ENCODE measurements at regions of chr11 and their contacts with region 1.

Region 1: DNA sequence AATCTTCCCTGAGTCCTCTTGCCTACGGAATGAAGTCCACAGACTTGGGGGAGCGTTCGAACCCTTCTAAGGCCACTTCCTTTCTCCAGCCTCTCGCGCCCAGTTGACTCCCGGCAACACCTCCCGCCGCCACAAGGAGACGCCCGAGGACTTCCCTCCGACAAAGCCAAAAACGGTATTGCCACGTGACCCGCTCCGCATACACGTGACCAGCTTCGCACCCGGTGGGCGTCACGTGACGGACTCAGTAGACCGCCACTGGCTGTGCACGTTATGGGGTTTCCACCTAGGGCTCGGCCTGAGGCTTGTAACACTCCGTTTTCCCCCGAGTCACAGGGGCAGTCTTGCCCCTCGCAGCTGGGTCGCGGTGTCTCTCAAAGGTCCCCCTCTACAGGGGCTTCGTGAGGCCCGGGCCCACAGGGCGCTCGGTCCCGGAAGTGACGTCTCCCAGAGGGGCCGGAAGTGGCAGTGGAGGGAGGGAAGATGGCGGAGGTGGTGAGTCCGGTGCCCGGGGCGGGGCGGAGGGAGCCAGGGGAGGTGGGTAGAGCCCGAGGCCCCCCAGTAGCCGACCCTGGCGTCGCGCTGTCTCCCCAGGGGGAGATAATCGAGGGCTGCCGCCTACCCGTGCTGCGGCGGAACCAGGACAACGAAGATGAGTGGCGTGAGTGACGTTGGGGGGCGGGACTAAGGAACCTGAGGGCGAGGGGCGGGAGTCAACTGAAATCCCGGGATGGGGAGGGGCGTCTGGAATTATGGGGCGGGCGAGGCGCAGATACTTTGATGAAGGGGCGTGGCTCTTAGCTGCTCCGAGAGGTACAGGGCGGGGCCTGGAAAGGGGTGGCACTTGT is at the start of gene KAT5:
- DNase-seq: peak; percentile 98 to 100 (median 99)
- H3K4me3 ChIP-seq: peak within 1 kb of the TSS; percentile 63 to 98
- H3K4me3 Mint-ChIP-seq: peak within 1 kb of the TSS; percentile 93 to 99 (median 96)
- H3K27ac ChIP-seq: peak within 1 kb of the TSS; percentile 98
- H3K27ac Mint-ChIP-seq: peak within 1 kb of the TSS; percentile 99 to 100 (median 99)
- H3K4me1 ChIP-seq: peaks cover 19% of the 10 kb centered on the region
- H3K4me1 Mint-ChIP-seq: peaks cover 9 to 38% (median 24%) of the 10 kb centered on the region in 4 donors
- H3K27me3 ChIP-seq: no peaks in the 10 kb centered on the region
- H3K27me3 Mint-ChIP-seq: no peaks in the 10 kb centered on the region
- total RNA-seq, gene KAT5: 93.5 to 106 TPM

Region 2: GRCh38 chr11:65652511-65653231 is 59.3 kb before region 1 on chr11:
- CTCF ChIA-PET with region 1: interaction called, 4 read pairs
- POLR2A ChIA-PET with region 1: interaction called, 17 read pairs
- intact Hi-C with region 1: no loop called
- DNase-seq: peak; percentile 95 to 99 (median 97)
- H3K4me3 ChIP-seq: peak overlapping the region; percentile 50 to 64
- H3K4me3 Mint-ChIP-seq: peak overlapping the region; percentile 88 to 95 (median 91)
- H3K27ac ChIP-seq: peak overlapping the region; percentile 91
- H3K27ac Mint-ChIP-seq: peak overlapping the region; percentile 96 to 99 (median 98)
- H3K4me1 ChIP-seq: peaks cover 35% of the 10 kb centered on the region
- H3K4me1 Mint-ChIP-seq: peaks cover 34 to 59% (median 48%) of the 10 kb centered on the region in 4 donors
- H3K27me3 ChIP-seq: no peaks in the 10 kb centered on the region
- H3K27me3 Mint-ChIP-seq: no peaks in the 10 kb centered on the region

Region 3: GRCh38 chr11:65773784-65774411 is 61.9 kb after region 1 on chr11:
- CTCF ChIA-PET with region 1: interaction called, 39 read pairs
- POLR2A ChIA-PET with region 1: interaction called, 8 read pairs
- intact Hi-C with region 1: loop called (anchors 1 kb)
- DNase-seq: no peak
- H3K4me3 ChIP-seq: no peak overlapping the region
- H3K4me3 Mint-ChIP-seq: no peak overlapping the region
- H3K27ac ChIP-seq: no peak overlapping the region
- H3K27ac Mint-ChIP-seq: no peak overlapping the region
- H3K4me1 ChIP-seq: peaks cover 3% of the 10 kb centered on the region
- H3K4me1 Mint-ChIP-seq: peaks cover 0 to 8% (median 3%) of the 10 kb centered on the region in 4 donors
- H3K27me3 ChIP-seq: no peaks in the 10 kb centered on the region
- H3K27me3 Mint-ChIP-seq: no peaks in the 10 kb centered on the region

Region 4: GRCh38 chr11:65817835-65818742 is 106.1 kb after region 1 on chr11:
- CTCF ChIA-PET with region 1: interaction called, 53 read pairs
- POLR2A ChIA-PET with region 1: interaction called, 25 read pairs
- intact Hi-C with region 1: loop called (anchors 1 kb)
- DNase-seq: peak; percentile 86 to 93 (median 88)
- H3K4me3 ChIP-seq: peak overlapping the region; percentile 24 to 70
- H3K4me3 Mint-ChIP-seq: peak overlapping the region; percentile 73 to 85 (median 78)
- H3K27ac ChIP-seq: peak overlapping the region; percentile 53
- H3K27ac Mint-ChIP-seq: peak overlapping the region; percentile 73 to 92 (median 81)
- H3K4me1 ChIP-seq: peaks cover 12% of the 10 kb centered on the region
- H3K4me1 Mint-ChIP-seq: peaks cover 6 to 16% (median 10%) of the 10 kb centered on the region in 4 donors
- H3K27me3 ChIP-seq: no peaks in the 10 kb centered on the region
- H3K27me3 Mint-ChIP-seq: no peaks in the 10 kb centered on the region

Region 5: DNA sequence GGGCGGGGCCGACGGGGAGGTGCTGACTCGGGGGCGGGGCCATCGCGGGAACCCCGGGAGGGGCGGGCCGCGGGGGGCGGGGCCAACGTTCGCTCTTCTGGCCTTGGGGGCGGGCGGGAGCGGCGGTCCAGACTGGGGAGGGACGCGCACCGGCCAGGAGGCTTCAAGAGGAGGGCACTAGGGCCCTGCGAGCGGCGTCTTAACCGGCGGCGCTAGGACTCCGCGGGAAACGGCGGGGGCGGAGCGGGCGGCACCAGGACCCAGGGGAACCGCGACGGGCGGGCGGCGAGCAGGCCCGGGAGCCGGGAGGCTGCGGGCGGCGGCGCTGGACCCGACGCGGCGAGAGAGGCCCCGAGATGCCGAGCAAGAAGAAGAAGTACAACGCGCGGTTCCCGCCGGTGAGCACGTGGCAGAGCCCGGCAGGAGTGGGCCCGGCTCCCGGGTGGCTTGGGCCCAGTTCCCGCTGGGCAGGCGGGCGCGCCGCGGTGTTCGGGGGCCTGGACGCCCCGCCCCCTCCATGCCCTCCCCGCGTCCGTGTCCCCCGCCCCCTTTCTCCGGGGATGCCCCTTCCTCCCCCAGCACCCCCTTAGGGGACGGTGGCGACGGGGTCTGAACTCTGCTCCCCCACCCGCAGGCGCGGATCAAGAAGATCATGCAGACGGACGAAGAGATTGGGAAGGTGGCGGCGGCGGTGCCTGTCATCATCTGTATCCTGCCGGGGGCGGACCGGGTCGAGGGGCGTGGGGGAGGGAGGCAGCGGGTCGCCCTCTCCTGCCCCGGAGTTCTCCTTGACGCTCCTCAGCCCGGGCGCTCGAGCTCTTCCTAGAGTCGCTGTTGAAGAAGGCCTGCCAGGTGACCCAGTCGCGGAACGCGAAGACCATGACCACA is 207.4 kb after region 1 on chr11 and contains the start of gene DRAP1:
- CTCF ChIA-PET with region 1: no interaction called
- POLR2A ChIA-PET with region 1: interaction called, 3 read pairs
- intact Hi-C with region 1: loop called (anchors 1 kb)
- DNase-seq: peak; percentile 97 to 99 (median 98)
- H3K4me3 ChIP-seq: peak within 1 kb of the TSS; percentile 76 to 89
- H3K4me3 Mint-ChIP-seq: peak within 1 kb of the TSS; percentile 89 to 95 (median 92)
- H3K27ac ChIP-seq: peak within 1 kb of the TSS; percentile 86
- H3K27ac Mint-ChIP-seq: peak within 1 kb of the TSS; percentile 89 to 95 (median 93)
- H3K4me1 ChIP-seq: peaks cover 52% of the 10 kb centered on the region
- H3K4me1 Mint-ChIP-seq: peaks cover 15 to 63% (median 39%) of the 10 kb centered on the region in 4 donors
- H3K27me3 ChIP-seq: no peaks in the 10 kb centered on the region
- H3K27me3 Mint-ChIP-seq: no peaks in the 10 kb centered on the region
- total RNA-seq, gene DRAP1: 78.2 to 78.7 TPM

Region 6: DNA sequence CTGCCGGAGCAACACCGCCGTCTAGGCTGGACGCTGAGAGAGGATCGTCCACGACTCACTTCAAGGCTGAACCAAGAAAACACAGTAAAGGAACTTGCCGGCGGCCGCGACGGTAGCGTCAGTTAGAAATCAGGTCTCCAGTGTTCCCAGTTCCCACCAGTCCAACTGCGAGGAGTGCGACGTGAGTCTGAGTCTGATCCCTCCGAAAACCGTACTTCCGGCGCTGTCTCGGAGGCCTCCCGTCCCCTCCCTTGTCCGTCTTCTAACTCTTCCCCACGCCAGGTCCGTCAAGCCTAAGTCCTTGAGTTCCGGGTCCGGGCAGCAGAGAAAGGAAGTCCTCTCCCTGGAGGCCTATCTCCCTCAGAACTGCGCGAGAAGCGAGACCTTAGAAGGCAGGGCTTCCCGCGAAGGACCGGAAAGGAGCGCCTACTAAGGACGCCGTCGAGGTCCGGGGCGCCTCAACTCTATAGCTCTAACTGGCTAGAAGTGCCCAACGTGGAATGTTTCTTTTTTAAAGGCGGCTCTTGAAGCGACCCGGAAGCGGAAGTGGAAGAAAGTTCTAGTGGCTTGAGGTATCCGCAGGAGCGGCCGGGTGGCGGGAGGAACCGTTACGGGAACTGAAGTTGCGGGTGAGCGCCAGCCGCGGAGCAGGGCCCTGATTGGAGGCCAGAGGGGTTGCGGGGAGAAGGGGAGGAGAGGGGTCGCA is 290.1 kb after region 1 on chr11 and contains the starts of genes BANF1 and EIF1AD:
- CTCF ChIA-PET with region 1: interaction called, 5 read pairs
- POLR2A ChIA-PET with region 1: interaction called, 11 read pairs
- intact Hi-C with region 1: loop called (anchors 1 kb)
- DNase-seq: peak; percentile 95 to 97 (median 96)
- H3K4me3 ChIP-seq: peak within 1 kb of the TSS; percentile 68 to 82
- H3K4me3 Mint-ChIP-seq: peak within 1 kb of the TSS; percentile 94 to 100 (median 99)
- H3K27ac ChIP-seq: peak within 1 kb of the TSS; percentile 87
- H3K27ac Mint-ChIP-seq: peak within 1 kb of the TSS; percentile 96 to 99 (median 99)
- H3K4me1 ChIP-seq: peaks cover 26% of the 10 kb centered on the region
- H3K4me1 Mint-ChIP-seq: peaks cover 12 to 49% (median 27%) of the 10 kb centered on the region in 4 donors
- H3K27me3 ChIP-seq: no peaks in the 10 kb centered on the region
- H3K27me3 Mint-ChIP-seq: no peaks in the 10 kb centered on the region
- total RNA-seq, gene BANF1: 90.8 to 92.9 TPM
- total RNA-seq, gene EIF1AD: 60.2 to 65.4 TPM

Region 7: GRCh38 chr11:66045177-66045639 is 333.2 kb after region 1 on chr11:
- CTCF ChIA-PET with region 1: interaction called, 14 read pairs
- POLR2A ChIA-PET with region 1: interaction called, 7 read pairs
- intact Hi-C with region 1: no loop called
- DNase-seq: peak; percentile 78 to 86 (median 81)
- H3K4me3 ChIP-seq: no peak overlapping the region
- H3K4me3 Mint-ChIP-seq: peak overlapping the region in 2 of 8 donors; percentile 32 to 55
- H3K27ac ChIP-seq: no peak overlapping the region
- H3K27ac Mint-ChIP-seq: peak overlapping the region in 2 of 7 donors; percentile 9 to 67
- H3K4me1 ChIP-seq: peaks cover 12% of the 10 kb centered on the region
- H3K4me1 Mint-ChIP-seq: peaks cover 5 to 16% (median 9%) of the 10 kb centered on the region in 4 donors
- H3K27me3 ChIP-seq: no peaks in the 10 kb centered on the region
- H3K27me3 Mint-ChIP-seq: peaks cover 0 to 2% of the 10 kb centered on the region in 2 donors

Measured in CD4-positive, alpha-beta memory T cell (primary cell).